ENCODE measurements at regions of chr15 and their contacts with region 1.

Region 1: DNA sequence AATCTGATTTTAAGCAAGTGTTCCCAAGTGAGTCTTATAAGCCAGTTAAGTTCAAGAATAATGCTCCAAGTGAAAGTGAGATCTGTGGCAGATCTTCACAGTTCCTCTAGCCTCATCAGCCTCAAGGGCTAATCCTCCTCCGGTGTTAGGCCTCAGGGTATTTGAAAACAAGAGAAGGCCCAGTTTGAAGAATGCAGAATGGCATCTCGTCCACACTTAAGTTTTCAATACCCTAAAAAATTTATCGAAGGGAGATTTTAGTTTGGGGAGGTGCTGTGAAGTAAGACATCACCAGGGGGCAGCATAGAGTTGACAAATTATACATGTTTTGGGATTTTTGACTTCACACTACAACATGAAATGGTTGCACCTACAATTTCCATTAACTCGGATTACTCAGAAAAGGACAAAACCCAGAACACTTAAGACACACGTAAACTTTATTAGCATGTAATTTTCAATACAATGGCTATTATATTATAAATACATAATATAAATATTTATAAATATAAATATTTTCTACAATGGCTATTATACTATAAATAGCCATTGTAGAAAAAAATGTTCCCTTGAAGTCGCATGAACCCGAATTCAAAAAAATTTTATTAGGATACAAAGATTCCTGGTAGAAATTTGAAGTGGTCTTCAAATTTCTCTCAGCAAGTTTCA is 2.3 kb upstream of the TMEM266 start:
- DNase-seq: peak; percentile 53 to 61
- ATAC-seq: no peak
- H3K4me3 ChIP-seq: no peak overlapping the region
- H3K27ac ChIP-seq: no peak overlapping the region
- H3K4me1 ChIP-seq: peaks cover 15% of the 10 kb centered on the region
- CTCF ChIP-seq: peak; percentile 92
- EP300 ChIP-seq: no peak
- POLR2A ChIP-seq: no peak
- RAD21 ChIP-seq: peak; percentile 70 to 71

Region 2: DNA sequence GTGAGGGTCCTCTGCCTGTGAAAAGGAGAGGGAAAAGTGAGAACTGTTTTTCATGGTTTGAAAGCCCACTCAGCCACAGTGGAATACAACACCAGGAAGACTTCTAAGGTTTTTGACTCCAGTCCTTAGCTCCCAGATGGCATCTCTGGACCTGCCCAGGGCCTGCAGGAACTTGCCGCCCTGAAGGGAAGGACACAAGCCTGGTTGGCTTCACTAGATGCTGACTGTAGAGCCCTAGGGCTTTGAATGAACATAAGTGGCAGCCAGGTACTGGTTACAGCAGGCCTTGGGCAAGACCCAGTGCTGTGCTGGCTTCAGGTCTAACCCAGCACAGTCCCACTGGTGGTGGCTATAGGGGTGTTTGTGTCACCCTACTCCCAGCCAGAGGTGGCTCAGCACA is 19.0 kb before region 1 on chr15:
- CTCF ChIA-PET with region 1: interaction called, 19 read pairs
- POLR2A ChIA-PET with region 1: no interaction called
- DNase-seq: no peak
- ATAC-seq: no peak
- H3K4me3 ChIP-seq: no peak overlapping the region
- H3K27ac ChIP-seq: no peak overlapping the region
- H3K4me1 ChIP-seq: no peaks in the 10 kb centered on the region
- CTCF ChIP-seq: no peak
- EP300 ChIP-seq: no peak
- POLR2A ChIP-seq: no peak
- RAD21 ChIP-seq: no peak

Region 3: GRCh38 chr15:76217029-76217428 is 159.6 kb after region 1 on chr15:
- CTCF ChIA-PET with region 1: no interaction called
- POLR2A ChIA-PET with region 1: no interaction called
- DNase-seq: peak in 1 of 2 experiments; percentile 38
- ATAC-seq: peak in 1 of 2 experiments; percentile 67; a peak in 3 of 6 replicates
- H3K4me3 ChIP-seq: 0 out of 3 replicates have a peak overlapping the region, but pooled peaks have one; percentile 5
- H3K27ac ChIP-seq: peak overlapping the region in 1 of 2 experiments; percentile 29; a peak in 4 of 6 replicates
- H3K4me1 ChIP-seq: peaks cover 19% of the 10 kb centered on the region
- CTCF ChIP-seq: no peak
- EP300 ChIP-seq: no peak
- POLR2A ChIP-seq: no peak
- RAD21 ChIP-seq: no peak